Caco-2 (cell line): ENCODE measurements at regions of chr15 and their contacts with region 1.

Region 1: DNA sequence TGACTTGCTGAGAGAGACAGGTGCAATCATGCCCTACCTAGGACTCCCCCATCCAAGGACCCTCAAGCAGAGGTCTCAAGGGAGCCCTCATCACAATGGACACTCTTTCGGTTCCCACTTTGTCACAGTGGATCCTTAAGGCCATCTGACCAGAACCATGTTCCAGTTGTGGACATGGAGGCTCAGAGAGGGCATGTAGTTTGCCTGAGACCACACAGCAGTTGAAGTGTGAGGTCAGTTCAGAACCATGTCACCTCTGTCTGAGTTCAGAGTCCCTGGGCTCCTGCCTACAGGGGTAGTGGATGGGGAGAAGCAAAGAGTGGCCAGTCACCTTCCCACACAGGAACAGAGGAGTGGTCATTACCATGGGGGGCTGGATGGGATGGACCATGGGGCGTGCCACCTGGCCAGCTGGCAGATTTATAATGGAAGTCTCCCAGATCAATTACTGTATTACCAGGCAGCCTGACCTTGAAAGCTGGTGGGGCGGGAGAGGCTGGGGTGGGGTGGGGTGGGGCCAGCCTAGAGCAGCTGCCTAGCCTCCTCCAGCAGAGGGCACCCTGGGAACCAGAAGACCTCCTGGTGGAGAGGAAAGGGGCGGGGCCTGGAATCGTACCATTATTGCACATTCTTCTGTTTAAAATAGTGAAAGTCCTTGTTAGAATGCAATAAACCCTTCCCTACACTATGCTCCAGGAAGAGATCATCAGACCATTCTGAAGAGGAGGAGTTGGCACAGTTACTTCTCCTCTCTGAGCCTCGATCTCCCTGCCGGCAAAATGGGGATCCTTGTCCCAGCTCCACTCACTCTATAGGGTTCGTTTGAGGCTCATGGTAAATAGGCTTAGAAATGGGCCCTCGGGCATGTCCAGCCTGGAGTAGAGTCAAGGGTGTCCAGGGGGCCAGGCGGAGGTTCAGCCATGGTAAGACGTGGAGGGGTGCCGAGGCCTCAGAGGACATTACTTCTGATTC is 26.9 kb upstream of the LINGO1 start:
- DNase-seq: peak; percentile 66 to 71
- H3K4me3 ChIP-seq: no peak overlapping the region
- H3K4me3 Mint-ChIP-seq: no peak overlapping the region
- H3K27ac Mint-ChIP-seq: no peak overlapping the region
- H3K4me1 ChIP-seq: peaks cover 14% of the 10 kb centered on the region
- H3K4me1 Mint-ChIP-seq: peaks cover 7% of the 10 kb centered on the region
- H3K27me3 ChIP-seq: no peaks in the 10 kb centered on the region
- H3K27me3 Mint-ChIP-seq: no peaks in the 10 kb centered on the region
- CTCF ChIP-seq: peak; percentile 53 to 59

Region 2: GRCh38 chr15:77607111-77607893 is 52.3 kb before region 1 on chr15:
- CTCF ChIA-PET with region 1: no interaction called
- POLR2A ChIA-PET with region 1: no interaction called
- intact Hi-C with region 1: no loop called
- DNase-seq: no peak
- H3K4me3 ChIP-seq: no peak overlapping the region
- H3K4me3 Mint-ChIP-seq: no peak overlapping the region
- H3K27ac Mint-ChIP-seq: no peak overlapping the region
- H3K4me1 ChIP-seq: no peaks in the 10 kb centered on the region
- H3K4me1 Mint-ChIP-seq: no peaks in the 10 kb centered on the region
- H3K27me3 ChIP-seq: no peaks in the 10 kb centered on the region
- H3K27me3 Mint-ChIP-seq: no peaks in the 10 kb centered on the region
- CTCF ChIP-seq: no peak

Region 3: GRCh38 chr15:77821188-77821958 is 161.7 kb after region 1 on chr15:
- CTCF ChIA-PET with region 1: interaction called, 7 read pairs
- POLR2A ChIA-PET with region 1: no interaction called
- intact Hi-C with region 1: loop called (anchors 1 kb)
- DNase-seq: peak; percentile 59 to 74
- H3K4me3 ChIP-seq: no peak overlapping the region
- H3K4me3 Mint-ChIP-seq: no peak overlapping the region
- H3K27ac Mint-ChIP-seq: no peak overlapping the region
- H3K4me1 ChIP-seq: 0 out of 2 replicates have a peak, but pooled peaks cover 4% of the 10 kb centered on the region
- H3K4me1 Mint-ChIP-seq: no peaks in the 10 kb centered on the region
- H3K27me3 ChIP-seq: peaks cover 3% of the 10 kb centered on the region
- H3K27me3 Mint-ChIP-seq: peaks cover 23% of the 10 kb centered on the region
- CTCF ChIP-seq: peak; percentile 71 to 89